HEK293T (cell line): ENCODE measurements at regions of chr6 and their contacts with region 1.

Region 1: GRCh38 chr6:27838058-27838944 is 73.9 kb downstream of the OR2B2 start:
- DNase-seq: peak; percentile 79

Region 2: DNA sequence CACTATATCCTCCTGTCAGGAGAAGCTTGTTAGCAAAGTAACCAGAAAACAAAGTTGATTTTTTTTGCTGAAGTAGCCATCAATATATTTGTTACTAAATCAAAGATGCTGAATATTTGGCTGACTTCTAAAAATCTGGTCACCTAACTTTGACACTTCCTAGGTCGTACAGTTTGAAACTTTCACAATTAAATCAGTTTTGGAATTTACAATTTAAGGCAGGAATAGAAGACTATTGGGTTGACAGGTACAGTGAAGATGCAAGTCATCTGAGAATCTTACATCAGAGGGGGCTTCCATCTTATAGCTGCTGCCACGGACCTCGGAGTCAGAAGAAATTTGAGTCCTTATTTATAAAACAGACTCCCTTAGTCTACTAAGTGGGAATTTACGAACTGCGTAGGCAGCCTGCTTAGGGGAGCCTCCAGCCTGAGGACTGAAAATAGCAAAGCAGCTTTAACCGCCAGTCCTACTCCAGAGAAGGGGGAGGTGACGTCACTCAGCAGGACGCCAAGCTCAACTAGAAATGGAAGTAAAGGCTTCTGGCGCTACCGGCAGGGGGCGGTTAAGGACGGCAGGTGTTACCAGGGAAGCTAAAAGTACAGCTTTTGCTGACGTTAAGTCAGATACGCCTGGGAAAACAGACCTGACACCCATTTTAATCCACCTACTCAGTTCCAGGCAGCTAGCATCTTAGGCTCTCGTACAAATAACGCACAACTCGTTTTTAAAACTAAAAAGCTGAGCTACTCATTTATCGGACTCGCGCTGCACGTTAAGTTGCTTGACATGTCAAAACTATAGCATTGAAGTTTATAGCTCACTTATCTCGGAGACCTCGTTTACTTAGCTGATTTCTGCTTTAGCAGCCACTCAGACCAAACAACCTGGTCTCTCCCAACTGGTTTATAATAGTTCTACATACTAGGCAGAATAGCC is 1812.1 kb before region 1 on chr6:
- CTCF ChIA-PET with region 1: no interaction called
- POLR2A ChIA-PET with region 1: interaction called, 28 read pairs
- DNase-seq: peak; percentile 55

Region 3: GRCh38 chr6:26054857-26055669 is 1783.2 kb before region 1 on chr6:
- CTCF ChIA-PET with region 1: no interaction called
- POLR2A ChIA-PET with region 1: interaction called, 13 read pairs
- DNase-seq: peak; percentile 62

Region 4: DNA sequence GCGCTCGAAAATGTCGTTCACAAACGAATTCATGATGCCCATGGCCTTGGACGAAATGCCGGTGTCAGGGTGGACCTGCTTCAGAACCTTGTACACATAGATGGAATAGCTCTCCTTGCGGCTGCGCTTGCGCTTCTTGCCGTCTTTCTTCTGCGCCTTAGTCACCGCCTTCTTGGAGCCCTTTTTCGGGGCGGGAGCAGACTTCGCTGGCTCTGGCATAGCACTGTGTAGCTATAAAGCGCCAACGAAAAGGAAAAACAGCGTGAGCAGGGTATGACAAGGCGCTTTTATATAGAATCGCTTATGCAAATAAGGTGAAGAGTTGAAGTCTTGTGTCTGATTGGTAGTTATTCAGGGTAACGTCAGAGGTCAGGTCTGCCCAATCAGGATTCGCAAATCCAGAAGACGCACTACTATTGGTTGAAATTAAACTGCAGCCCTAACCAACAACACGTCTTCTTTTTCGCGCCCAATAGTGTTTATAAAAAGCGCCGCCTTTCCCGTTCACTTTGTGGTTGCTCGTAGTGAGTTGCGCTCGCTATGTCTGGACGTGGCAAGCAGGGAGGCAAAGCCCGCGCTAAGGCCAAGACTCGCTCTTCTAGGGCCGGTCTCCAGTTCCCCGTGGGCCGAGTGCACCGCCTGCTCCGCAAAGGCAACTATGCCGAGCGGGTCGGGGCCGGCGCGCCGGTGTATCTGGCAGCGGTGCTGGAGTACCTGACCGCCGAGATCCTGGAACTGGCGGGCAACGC is 705.6 kb before region 1 on chr6:
- CTCF ChIA-PET with region 1: no interaction called
- POLR2A ChIA-PET with region 1: interaction called, 30 read pairs
- DNase-seq: peak; percentile 85

Region 5: GRCh38 chr6:27157459-27158315 is 680.6 kb before region 1 on chr6:
- CTCF ChIA-PET with region 1: no interaction called
- POLR2A ChIA-PET with region 1: no interaction called
- DNase-seq: peak; percentile 50

Region 6: DNA sequence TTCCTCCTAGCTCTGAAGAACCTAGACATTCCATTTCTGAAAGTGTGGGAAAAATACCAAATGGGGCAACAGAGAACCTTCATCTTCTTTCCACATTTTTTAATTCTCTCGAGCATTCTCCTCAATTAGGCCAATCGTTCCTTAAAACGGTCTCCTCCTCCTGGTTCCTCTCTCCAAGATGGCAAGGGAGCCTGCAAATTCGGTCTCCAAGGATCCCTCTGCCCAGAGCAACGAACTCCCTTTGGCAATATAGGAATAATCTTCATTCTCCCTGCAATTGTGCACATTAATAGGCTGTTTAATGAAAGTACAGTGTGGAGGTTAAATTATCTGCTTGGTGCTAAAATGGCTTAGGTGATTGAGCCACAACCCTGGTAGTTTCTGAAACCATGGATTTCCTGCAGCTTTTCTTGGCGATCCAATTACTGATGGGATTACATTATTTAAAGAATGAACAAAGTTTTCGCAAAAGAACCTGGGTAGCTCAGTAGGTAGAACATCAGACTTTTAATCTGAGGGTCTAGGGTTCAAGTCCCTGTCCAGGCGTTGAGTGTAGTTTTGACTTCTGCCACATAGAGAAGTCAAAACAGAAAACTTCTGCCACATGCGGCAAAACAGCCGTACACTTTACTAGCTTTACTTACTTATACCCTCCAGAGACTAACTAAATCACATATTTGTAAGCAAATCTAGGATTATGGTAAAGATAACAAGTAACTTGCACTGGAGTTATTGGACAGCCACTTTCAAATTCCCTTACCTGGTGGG is 262.5 kb before region 1 on chr6:
- CTCF ChIA-PET with region 1: no interaction called
- POLR2A ChIA-PET with region 1: no interaction called
- DNase-seq: peak; percentile 37

Region 7: DNA sequence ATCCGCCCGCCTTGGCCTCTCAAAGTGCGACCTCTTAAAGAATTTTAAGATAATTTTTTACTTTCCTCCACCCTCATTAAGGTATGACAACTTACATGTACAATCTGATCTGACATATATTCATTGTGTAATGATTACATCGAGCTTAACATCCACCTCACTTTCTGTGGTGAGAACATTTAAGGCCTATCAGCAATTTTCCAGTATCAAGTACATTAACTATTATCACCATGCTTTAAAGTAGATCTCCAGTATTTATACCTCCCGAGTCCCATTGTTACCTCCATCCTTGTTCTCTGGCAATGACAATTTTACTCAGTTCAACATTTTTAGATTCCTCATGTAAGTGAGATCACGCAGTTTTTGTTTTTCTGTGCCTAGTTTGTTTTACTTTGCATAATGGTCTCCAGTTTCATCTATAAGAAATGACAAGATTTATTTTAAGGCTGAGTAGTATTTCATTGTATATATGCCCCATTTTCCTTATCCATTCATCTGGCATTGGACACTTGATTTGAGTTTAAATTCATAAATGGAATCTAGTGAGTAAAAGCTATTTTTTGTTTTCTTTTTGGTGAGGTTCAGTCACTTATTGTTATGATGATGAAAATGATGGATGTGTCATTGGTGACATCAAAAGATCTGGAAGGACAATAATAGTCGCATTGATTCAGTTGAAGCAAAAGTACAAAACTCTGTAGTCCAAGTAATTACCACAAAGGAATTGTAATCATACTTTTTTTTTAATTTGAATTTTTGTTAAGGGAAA is 13.1 kb before region 1 on chr6:
- CTCF ChIA-PET with region 1: interaction called, 4 read pairs
- POLR2A ChIA-PET with region 1: interaction called, 244 read pairs
- DNase-seq: no peak

Region 8: DNA sequence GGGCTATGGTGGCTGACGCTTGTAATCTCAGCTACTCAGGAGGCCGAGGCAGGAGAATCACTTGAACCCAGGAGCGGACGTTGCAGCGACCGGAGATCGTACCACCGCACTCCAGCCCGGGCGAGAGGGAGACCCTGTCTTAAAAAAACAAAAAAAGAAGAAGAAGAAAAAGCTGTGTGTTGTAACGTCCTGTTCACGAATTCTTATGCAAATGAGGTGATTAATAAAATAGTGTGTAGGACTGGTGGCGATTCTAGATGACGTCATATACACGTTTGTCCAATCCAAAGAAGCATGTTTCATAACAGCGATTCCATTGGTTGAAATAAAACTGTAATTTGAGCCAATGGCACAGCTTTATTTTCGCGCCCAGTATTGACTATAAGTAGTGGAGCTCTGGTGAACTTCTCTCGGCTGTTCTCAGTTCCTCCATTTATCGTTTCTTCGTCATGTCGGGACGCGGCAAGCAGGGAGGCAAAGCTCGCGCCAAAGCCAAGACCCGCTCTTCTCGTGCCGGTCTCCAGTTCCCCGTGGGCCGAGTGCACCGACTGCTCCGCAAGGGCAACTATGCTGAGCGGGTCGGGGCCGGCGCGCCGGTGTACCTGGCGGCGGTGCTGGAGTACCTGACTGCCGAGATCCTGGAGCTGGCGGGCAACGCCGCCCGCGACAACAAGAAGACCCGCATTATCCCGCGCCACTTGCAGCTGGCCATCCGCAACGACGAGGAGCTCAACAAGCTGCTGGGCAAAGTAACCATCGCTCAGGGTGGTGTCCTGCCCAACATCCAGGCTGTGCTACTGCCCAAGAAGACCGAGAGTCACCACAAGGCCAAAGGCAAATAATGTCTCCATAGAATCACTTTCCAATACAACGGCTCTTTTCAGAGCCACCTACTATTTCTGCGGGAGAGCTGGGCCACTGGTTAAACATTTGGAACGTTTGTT is 26.9 kb after region 1 on chr6:
- CTCF ChIA-PET with region 1: no interaction called
- POLR2A ChIA-PET with region 1: interaction called, 295 read pairs
- DNase-seq: peak; percentile 80